CD4-positive, alpha-beta memory T cell (primary cell): ENCODE measurements at regions of chr10 and their contacts with region 1.

Region 1: DNA sequence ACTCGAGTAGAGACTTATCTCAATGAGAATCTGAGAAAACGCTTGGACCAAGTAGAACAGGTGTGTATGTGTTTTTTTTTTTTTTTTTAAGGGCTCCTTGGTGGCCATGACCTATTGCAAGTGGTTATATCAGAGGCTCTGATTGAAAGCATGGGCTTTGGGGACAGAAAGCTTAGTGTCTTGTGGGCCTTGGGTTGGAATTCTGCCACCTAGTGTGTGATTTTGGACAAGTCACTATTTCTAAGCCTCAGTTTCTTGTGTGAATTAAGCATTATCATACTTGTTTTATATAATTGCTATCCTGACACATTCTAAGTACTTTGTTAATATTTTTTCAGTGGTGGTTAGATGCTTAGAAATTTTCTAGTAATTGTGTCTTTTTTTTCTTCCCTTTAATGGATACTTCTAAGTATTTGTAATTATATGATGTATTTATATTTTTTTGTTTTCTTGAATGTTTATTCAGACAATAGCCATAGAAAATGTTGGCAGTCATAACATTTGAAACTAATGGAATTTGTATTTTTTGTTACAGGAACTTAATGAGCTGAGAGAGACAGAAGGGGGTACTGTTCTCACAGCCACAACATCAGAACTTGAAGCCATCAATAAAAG is 33.1 kb downstream of the SMC3 start:
- DNase-seq: peak in 4 of 5 donors; percentile 40 to 49 (median 44)
- H3K4me3 ChIP-seq: no peak overlapping the region
- H3K4me3 Mint-ChIP-seq: no peak overlapping the region
- H3K27ac ChIP-seq: no peak overlapping the region
- H3K27ac Mint-ChIP-seq: peak overlapping the region in 3 of 7 donors; percentile 36 to 50 (median 41)
- H3K4me1 ChIP-seq: no peaks in the 10 kb centered on the region
- H3K4me1 Mint-ChIP-seq: peaks cover 0 to 2% (median 0%) of the 10 kb centered on the region in 4 donors
- H3K27me3 ChIP-seq: no peaks in the 10 kb centered on the region
- H3K27me3 Mint-ChIP-seq: no peaks in the 10 kb centered on the region

Region 2: GRCh38 chr10:110311357-110311949 is 289.1 kb before region 1 on chr10:
- CTCF ChIA-PET with region 1: interaction called, 26 read pairs
- POLR2A ChIA-PET with region 1: no interaction called
- intact Hi-C with region 1: loop called (anchors 1 kb)
- DNase-seq: peak; percentile 43 to 56 (median 48)
- H3K4me3 ChIP-seq: no peak overlapping the region
- H3K4me3 Mint-ChIP-seq: no peak overlapping the region
- H3K27ac ChIP-seq: no peak overlapping the region
- H3K27ac Mint-ChIP-seq: peak overlapping the region in 1 of 7 donors; percentile 9
- H3K4me1 ChIP-seq: peaks cover 1% of the 10 kb centered on the region
- H3K4me1 Mint-ChIP-seq: peaks cover 0 to 7% (median 0%) of the 10 kb centered on the region in 4 donors
- H3K27me3 ChIP-seq: no peaks in the 10 kb centered on the region
- H3K27me3 Mint-ChIP-seq: no peaks in the 10 kb centered on the region

Region 3: DNA sequence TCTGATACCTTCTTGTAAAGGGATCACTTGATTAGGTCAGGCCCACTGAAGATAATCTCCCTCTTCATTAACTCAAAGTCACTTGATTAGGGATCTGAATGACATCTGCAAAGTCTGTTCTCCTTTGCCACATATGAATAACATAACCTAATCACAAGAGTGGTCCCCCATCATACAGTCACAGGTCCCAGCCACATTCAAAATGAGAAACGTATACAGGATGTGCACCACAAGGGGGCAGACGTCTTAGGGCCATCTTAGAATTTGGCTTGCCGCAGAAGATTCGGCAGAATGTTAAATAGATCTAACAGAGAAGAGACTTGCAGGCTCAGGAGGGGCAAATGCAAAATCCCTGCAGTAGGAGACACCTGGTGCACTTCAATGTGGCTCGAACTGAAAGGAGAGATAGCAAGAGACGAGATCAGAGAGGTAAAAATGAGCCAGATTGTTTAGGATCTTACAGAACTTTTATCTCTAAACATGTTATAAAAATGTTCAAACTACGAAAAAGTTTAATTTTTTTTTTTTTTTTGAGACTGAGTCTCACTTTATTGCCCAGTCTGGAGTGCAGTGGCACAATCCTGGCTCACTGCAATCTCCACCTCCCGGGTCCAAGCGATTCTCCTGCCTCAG is 43.5 kb before region 1 on chr10:
- CTCF ChIA-PET with region 1: interaction called, 9 read pairs
- POLR2A ChIA-PET with region 1: no interaction called
- intact Hi-C with region 1: loop called (anchors 1 kb)
- DNase-seq: peak; percentile 45 to 73 (median 62)
- H3K4me3 ChIP-seq: no peak overlapping the region
- H3K4me3 Mint-ChIP-seq: peak overlapping the region in 1 of 8 donors; percentile 51
- H3K27ac ChIP-seq: no peak overlapping the region
- H3K27ac Mint-ChIP-seq: peak overlapping the region in 1 of 7 donors; percentile 61
- H3K4me1 ChIP-seq: peaks cover 4% of the 10 kb centered on the region
- H3K4me1 Mint-ChIP-seq: peaks cover 3 to 6% (median 4%) of the 10 kb centered on the region in 4 donors
- H3K27me3 ChIP-seq: no peaks in the 10 kb centered on the region
- H3K27me3 Mint-ChIP-seq: peaks cover 4 to 9% of the 10 kb centered on the region in 2 donors

Region 4: DNA sequence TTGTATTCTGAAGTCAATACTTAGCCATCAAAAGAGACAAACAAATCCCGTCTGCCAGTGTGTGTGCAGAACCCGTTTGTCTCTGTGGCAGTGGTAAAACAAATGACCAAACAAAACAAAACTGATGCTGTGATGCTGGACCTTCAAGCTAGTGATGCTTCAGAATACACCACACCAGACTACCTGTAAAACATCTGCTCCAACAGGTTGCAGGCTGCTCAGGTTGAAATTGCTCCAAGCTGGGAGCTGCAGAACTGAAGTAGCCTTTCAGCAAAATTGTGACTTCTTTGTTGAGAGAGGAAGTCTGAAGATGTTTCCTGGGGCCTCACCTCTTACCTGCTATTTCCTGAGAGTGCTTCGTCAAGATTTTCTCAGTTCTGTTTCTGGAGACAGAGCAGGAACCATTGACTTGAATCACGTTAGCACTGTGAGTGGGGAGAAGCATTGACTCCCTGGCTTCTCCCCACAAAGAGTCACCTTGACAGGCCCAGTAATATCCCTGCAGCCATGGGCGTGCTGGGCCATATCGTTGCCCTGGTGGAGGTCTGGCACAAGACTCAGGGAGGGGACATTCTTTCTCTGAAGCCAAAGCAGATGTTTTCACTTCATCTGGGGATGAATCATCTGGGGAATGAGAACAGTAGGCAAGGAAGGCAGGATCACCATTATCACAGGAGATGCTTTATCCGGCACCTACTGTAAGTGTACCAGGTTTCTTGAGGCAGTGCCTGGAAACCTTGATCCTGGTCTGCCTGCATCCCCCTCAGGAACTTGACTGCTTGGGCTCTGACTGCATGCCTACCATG is 123.7 kb after region 1 on chr10:
- CTCF ChIA-PET with region 1: no interaction called
- POLR2A ChIA-PET with region 1: no interaction called
- intact Hi-C with region 1: no loop called
- DNase-seq: peak in 4 of 5 donors; percentile 18 to 28 (median 24)
- H3K4me3 ChIP-seq: peak overlapping the region in 1 of 2 donors; percentile 21
- H3K4me3 Mint-ChIP-seq: peak overlapping the region; percentile 61 to 84 (median 74)
- H3K27ac ChIP-seq: peak overlapping the region; percentile 46
- H3K27ac Mint-ChIP-seq: peak overlapping the region; percentile 85 to 95 (median 92)
- H3K4me1 ChIP-seq: peaks cover 38% of the 10 kb centered on the region
- H3K4me1 Mint-ChIP-seq: peaks cover 33 to 47% (median 38%) of the 10 kb centered on the region in 4 donors
- H3K27me3 ChIP-seq: no peaks in the 10 kb centered on the region
- H3K27me3 Mint-ChIP-seq: no peaks in the 10 kb centered on the region